Ascending aorta (tissue), 2 donors: ENCODE measurements at regions of chrX and their contacts with region 1.

Region 1: GRCh38 chrX:107654872-107655761 is 26.8 kb downstream of the PRPS1 start:
- DNase-seq: peak; percentile 48 to 88
- H3K4me3 ChIP-seq: peak overlapping the region in 1 of 2 donors; percentile 36
- H3K27ac ChIP-seq: peak overlapping the region; percentile 48 to 63
- H3K4me1 ChIP-seq: peaks cover 0 to 3% of the 10 kb centered on the region in 2 donors
- H3K27me3 ChIP-seq: no peaks in the 10 kb centered on the region
- CTCF ChIP-seq: peak; percentile 56 to 71 (median 57)

Region 2: GRCh38 chrX:107627838-107628661 is 27.1 kb before region 1 on chrX and contains the start of gene PRPS1:
- intact Hi-C with region 1: loop called (anchors 2 kb)
- DNase-seq: peak; percentile 77 to 96
- H3K4me3 ChIP-seq: peak within 1 kb of the TSS; percentile 47 to 74
- H3K27ac ChIP-seq: peak within 1 kb of the TSS; percentile 77 to 86
- H3K4me1 ChIP-seq: no peaks in the 10 kb centered on the region
- H3K27me3 ChIP-seq: no peaks in the 10 kb centered on the region
- CTCF ChIP-seq: no peak
- total RNA-seq, gene PRPS1: 14.0 TPM

Region 3: DNA sequence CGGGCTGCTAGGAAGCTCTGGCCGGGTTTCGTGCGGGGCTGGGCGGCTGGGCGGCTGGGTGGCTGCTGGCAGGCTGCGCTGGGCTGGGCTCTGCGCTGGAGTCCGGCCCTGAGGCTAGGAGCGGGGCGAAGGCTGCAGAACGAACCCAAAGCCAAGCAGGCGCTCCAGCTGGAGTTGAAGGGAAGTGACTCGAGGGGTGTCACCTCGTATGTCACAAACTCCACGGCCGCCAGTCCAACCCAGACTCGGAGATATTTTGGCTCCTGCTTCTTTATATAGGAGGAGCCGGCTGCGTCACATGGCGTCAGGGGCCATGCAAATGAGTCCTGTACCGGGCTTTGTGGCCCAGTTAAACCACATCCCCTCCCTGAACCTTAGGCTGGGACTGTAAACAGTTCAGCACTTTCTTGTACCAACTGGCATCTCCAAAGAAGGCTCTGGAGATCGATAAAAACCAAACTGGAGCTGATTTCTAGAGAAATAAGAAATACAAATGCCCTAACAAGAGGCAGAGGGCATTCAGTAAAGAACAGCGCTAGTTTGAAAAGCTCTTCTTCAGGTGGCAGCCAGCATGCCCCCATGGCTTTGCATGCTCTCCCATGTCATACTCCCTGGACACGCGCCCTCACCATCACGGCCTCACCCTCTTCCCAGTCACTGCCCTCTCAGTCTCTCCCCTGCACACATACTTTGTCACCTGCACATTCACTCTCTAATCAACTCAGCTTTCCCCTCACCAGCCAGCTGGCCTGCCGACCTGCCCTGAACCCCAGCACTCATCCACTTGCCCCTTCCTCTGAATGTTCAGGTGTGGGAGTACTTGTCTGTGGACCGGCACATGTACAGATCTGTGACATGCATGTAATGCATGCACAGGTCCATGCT is 61.9 kb after region 1 on chrX:
- intact Hi-C with region 1: loop called (anchors 5 kb)
- DNase-seq: peak; percentile 89 to 96
- H3K4me3 ChIP-seq: peak overlapping the region; percentile 74 to 87
- H3K27ac ChIP-seq: peak overlapping the region; percentile 96 to 97
- H3K4me1 ChIP-seq: peaks cover 0 to 4% of the 10 kb centered on the region in 2 donors
- H3K27me3 ChIP-seq: no peaks in the 10 kb centered on the region
- CTCF ChIP-seq: peak in 1 of 3 experiments; percentile 4

Region 4: DNA sequence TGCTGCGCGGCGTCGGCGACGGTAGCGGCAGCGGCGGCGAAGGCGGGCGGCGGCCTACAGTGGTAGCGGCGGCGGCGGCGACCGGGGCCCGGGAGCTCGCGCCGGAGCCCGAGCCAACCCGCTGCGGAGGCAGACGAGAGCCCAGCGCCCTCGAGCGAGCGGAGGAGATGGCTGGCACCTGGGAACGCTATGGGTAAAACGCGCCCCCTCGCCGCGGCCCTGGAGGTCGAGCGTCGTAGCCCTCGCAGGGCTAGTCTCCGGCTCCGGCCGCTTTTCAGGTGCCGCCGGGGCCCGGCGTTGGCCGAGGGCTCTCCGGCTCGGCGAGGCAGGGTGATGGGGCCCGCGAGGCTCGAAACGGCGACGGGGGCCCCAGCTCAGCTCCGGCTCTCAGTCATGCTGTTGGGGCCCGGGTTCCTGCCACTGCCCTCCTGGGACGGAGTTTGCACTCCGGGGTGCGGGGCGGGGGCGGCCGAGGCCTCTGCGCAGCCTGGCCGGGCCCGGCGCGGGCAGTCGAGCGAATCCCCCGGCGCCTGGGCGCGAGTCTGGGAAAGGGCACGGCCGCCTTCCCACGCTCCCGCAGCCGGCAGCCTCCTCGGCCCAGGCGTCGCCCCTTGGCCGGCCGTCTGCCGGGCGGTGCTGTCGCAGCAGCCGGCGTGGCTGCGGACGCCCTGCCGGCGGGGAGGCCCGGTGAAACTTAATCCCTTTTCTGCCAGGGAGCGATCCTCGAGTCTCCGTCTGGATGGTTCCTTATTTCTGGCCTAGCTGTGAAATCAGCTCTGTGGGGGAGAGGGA is 171.3 kb after region 1 on chrX:
- intact Hi-C with region 1: loop called (anchors 5 kb)
- DNase-seq: peak in 1 of 2 donors; percentile 65
- H3K4me3 ChIP-seq: peak overlapping the region; percentile 57 to 73
- H3K27ac ChIP-seq: peak overlapping the region; percentile 93 to 98
- H3K4me1 ChIP-seq: no peaks in the 10 kb centered on the region
- H3K27me3 ChIP-seq: peaks cover 4% of the 10 kb centered on the region
- CTCF ChIP-seq: no peak

Region 5: DNA sequence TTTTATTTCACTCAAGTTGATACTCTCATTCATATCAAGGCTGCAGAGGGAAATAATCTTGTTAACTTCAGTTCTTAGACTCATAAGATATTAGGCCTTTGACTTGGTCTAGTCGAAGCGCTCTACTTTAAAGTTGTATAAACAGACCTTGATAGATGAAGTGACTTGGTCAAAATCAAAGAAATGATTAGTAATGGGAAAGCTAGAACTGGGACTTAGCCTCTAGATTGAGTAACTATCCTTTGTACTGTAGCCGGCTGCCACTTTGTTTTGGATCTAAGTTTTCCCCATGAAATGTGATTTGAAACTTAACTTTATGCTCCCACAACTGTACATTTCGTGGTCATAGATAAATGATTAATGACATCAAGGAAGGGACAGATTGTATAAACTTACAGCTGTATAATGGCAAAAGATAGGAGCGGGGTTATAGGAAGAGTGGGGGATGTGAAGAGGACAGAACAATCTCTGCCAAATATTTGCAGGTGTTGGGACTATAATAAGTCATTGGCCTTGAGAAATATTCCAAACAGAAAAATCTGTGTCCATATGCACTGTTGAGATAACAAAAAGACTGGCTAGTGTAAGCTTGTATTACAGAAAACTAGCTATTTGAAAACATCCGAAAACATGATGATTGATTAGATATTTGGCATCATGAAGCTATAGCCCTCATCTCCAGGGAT is 187.7 kb after region 1 on chrX:
- intact Hi-C with region 1: no loop called
- DNase-seq: no peak
- H3K4me3 ChIP-seq: no peak overlapping the region
- H3K27ac ChIP-seq: no peak overlapping the region
- H3K4me1 ChIP-seq: no peaks in the 10 kb centered on the region
- H3K27me3 ChIP-seq: no peaks in the 10 kb centered on the region
- CTCF ChIP-seq: no peak

Region 6: GRCh38 chrX:107894038-107894437 is 238.9 kb after region 1 on chrX:
- intact Hi-C with region 1: loop called (anchors 10 kb)
- DNase-seq: no peak
- H3K4me3 ChIP-seq: no peak overlapping the region
- H3K27ac ChIP-seq: no peak overlapping the region
- H3K4me1 ChIP-seq: no peaks in the 10 kb centered on the region
- H3K27me3 ChIP-seq: no peaks in the 10 kb centered on the region
- CTCF ChIP-seq: peak; percentile 32 to 54 (median 53)